CD4-positive, alpha-beta memory T cell (primary cell): ENCODE measurements at regions of chr10 and their contacts with region 1.

Region 1: GRCh38 chr10:68600041-68600778 is 40.1 kb downstream of the TET1 start:
- DNase-seq: peak; percentile 47 to 66 (median 56)
- H3K4me3 ChIP-seq: peak overlapping the region; percentile 67 to 72
- H3K4me3 Mint-ChIP-seq: peak overlapping the region; percentile 87 to 96 (median 93)
- H3K27ac ChIP-seq: peak overlapping the region; percentile 27
- H3K27ac Mint-ChIP-seq: peak overlapping the region; percentile 47 to 88 (median 85)
- H3K4me1 ChIP-seq: peaks cover 29% of the 10 kb centered on the region
- H3K4me1 Mint-ChIP-seq: peaks cover 22 to 42% (median 33%) of the 10 kb centered on the region in 4 donors
- H3K27me3 ChIP-seq: no peaks in the 10 kb centered on the region
- H3K27me3 Mint-ChIP-seq: no peaks in the 10 kb centered on the region

Region 2: GRCh38 chr10:67936416-67936815 is 663.8 kb before region 1 on chr10:
- CTCF ChIA-PET with region 1: no interaction called
- POLR2A ChIA-PET with region 1: no interaction called
- intact Hi-C with region 1: no loop called
- DNase-seq: no peak
- H3K4me3 ChIP-seq: no peak overlapping the region
- H3K4me3 Mint-ChIP-seq: no peak overlapping the region
- H3K27ac ChIP-seq: no peak overlapping the region
- H3K27ac Mint-ChIP-seq: peak overlapping the region in 1 of 7 donors; percentile 32
- H3K4me1 ChIP-seq: no peaks in the 10 kb centered on the region
- H3K4me1 Mint-ChIP-seq: peaks cover 0 to 2% (median 0%) of the 10 kb centered on the region in 4 donors
- H3K27me3 ChIP-seq: no peaks in the 10 kb centered on the region
- H3K27me3 Mint-ChIP-seq: no peaks in the 10 kb centered on the region

Region 3: DNA sequence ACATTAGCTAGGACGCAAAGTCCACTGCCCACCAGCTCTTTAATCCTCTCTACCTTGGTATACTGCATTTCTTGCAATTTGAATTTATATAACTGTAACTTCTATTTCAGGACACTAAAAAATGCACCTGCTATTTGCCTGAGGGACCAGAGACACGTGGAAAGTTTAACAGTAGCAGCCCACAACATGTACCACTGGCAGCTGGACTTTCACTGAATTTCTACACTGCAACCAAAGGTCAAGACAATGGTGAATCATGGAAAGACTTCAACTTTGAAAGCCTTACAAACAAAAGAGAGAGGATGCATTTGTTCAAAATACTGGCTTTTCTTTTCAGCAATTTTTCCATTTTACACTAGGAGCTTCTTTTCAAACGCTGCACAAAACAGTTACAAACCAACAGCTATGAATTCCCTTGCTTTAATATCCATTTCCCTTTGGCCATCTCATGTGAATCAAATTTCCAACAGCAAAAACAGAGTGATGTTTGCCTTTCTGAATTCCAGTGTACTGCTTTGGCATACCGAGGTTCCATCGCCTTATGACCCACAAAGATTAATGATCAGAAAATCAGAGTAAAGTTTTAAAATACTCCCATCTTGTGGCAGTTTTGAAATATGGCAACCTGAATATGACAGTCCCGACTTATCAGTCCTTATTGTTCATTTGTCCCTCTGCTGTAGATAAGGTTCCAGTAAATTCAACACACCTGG is 298.3 kb before region 1 on chr10:
- CTCF ChIA-PET with region 1: no interaction called
- POLR2A ChIA-PET with region 1: no interaction called
- intact Hi-C with region 1: no loop called
- DNase-seq: peak in 4 of 5 donors; percentile 16 to 29 (median 24)
- H3K4me3 ChIP-seq: no peak overlapping the region
- H3K4me3 Mint-ChIP-seq: no peak overlapping the region
- H3K27ac ChIP-seq: no peak overlapping the region
- H3K27ac Mint-ChIP-seq: no peak overlapping the region
- H3K4me1 ChIP-seq: no peaks in the 10 kb centered on the region
- H3K4me1 Mint-ChIP-seq: peaks cover 0 to 1% (median 0%) of the 10 kb centered on the region in 4 donors
- H3K27me3 ChIP-seq: no peaks in the 10 kb centered on the region
- H3K27me3 Mint-ChIP-seq: no peaks in the 10 kb centered on the region

Region 4: DNA sequence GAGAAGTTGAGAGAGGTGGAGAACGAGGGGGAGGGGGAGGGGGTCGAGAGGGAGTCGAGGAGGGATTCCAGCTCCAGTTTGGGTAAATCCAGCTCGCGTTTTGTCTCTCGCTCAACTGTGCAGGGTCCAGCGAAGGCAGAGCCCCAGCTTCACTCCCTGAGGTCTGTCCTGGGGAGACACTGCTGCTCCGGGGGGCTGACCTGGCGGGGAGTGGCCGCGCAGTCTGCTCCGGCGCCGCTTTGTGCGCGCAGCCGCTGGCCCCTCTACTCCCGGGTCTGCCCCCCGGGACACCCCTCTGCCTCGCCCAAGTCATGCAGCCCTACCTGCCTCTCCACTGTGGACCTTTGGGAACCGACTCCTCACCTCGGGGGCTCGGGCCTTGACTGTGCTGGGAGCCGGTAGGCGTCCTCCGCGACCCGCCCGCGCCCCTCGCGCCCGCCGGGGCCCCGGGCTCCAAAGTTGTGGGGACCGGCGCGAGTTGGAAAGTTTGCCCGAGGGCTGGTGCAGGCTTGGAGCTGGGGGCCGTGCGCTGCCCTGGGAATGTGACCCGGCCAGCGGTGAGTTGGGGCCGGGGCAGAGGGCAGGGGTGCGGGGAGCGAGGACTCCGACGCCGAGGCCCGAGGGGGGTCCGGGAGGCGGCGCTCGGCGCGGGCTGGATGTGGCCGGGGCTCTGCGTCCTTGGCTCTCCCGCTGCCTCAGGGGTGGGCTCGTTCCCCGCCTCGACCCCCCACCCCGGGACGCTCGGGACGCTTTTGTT is 39.8 kb before region 1 on chr10 and contains the start of gene TET1:
- CTCF ChIA-PET with region 1: no interaction called
- POLR2A ChIA-PET with region 1: interaction called, 9 read pairs
- intact Hi-C with region 1: loop called (anchors 1 kb)
- DNase-seq: peak in 1 of 5 donors; percentile 17
- H3K4me3 ChIP-seq: peak within 1 kb of the TSS in 1 of 2 donors; percentile 52
- H3K4me3 Mint-ChIP-seq: peak within 1 kb of the TSS; percentile 71 to 90 (median 78)
- H3K27ac ChIP-seq: no peak within 1 kb of the TSS
- H3K27ac Mint-ChIP-seq: no peak within 1 kb of the TSS
- H3K4me1 ChIP-seq: peaks cover 30% of the 10 kb centered on the region
- H3K4me1 Mint-ChIP-seq: peaks cover 15 to 34% (median 24%) of the 10 kb centered on the region in 4 donors
- H3K27me3 ChIP-seq: peaks cover 19% of the 10 kb centered on the region
- H3K27me3 Mint-ChIP-seq: peaks cover 42 to 48% of the 10 kb centered on the region in 2 donors
- total RNA-seq, gene TET1: 1.4 to 1.5 TPM